Breast epithelium (tissue), 4 donors: ENCODE measurements at regions of chr2 and their contacts with region 1.

Region 1: GRCh38 chr2:140295767-140296166 is 1515.6 kb upstream of the NXPH2 start:
- DNase-seq: no peak
- H3K4me3 ChIP-seq: no peak overlapping the region
- H3K27ac ChIP-seq: no peak overlapping the region
- H3K4me1 ChIP-seq: no peaks in the 10 kb centered on the region
- H3K27me3 ChIP-seq: no peaks in the 10 kb centered on the region
- CTCF ChIP-seq: no peak
- POLR2A ChIP-seq: no peak

Region 2: DNA sequence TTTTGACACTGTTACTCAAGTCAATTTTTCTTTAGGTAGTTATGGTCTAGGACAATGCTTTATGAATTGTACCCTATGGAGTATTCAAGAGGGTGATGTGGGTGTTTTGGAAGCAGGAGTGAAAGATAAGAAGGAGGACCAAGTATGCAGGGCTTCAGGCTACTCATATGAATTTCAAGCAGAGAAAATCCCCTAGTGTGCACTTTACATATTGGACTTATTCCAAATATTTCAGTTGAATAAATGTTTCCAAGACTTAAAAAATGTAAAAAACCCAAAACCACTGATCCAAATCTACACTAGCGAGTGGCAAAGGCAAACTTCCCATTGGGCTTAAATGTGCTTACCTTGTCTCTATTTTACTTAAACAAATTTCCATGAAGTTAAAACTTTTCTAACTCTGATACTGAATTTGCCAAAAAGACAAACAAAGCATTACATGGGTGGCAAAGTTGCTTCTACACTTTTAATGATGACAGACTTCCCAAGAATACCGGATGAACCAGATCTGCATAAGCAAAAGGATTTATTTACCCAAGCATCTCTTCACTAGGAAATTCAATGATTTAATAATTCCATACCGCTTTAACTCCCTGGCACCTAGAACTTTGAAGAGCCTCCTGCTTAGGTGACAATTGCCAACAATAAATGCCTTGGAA is 282.1 kb before region 1 on chr2:
- intact Hi-C with region 1: loop called (anchors 5 kb)
- DNase-seq: no peak
- H3K4me3 ChIP-seq: no peak overlapping the region
- H3K27ac ChIP-seq: no peak overlapping the region
- H3K4me1 ChIP-seq: no peaks in the 10 kb centered on the region
- H3K27me3 ChIP-seq: no peaks in the 10 kb centered on the region
- CTCF ChIP-seq: no peak
- POLR2A ChIP-seq: no peak

Region 3: DNA sequence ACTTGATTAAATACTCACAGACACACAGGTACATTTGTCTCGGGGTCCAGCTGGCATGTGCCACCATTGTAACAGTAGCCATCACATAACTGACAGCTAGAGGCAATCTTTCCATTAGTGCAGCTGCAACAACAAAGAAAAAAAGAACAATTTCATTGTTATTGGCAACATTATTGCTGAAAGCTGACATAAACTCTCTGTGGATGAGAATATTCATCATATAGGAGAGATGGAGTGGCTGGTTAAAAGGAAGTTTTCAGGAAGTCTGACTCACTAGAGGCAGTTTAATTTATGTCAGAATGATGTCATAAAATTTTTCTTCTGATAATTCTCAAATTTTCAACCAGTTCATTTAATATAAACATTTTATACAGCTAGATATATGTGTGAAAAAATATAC is 25.5 kb before region 1 on chr2:
- intact Hi-C with region 1: no loop called
- DNase-seq: no peak
- H3K4me3 ChIP-seq: no peak overlapping the region
- H3K27ac ChIP-seq: no peak overlapping the region
- H3K4me1 ChIP-seq: no peaks in the 10 kb centered on the region
- H3K27me3 ChIP-seq: no peaks in the 10 kb centered on the region
- CTCF ChIP-seq: no peak
- POLR2A ChIP-seq: no peak